ENCODE measurements at regions of chr3 and their contacts with region 1.

Region 1: GRCh38 chr3:64224826-64225610 is at the start of gene PRICKLE2:
- DNase-seq: peak; percentile 95
- H3K4me3 ChIP-seq: peak within 1 kb of the TSS in 2 of 3 experiments; percentile 45 to 52
- H3K27ac ChIP-seq: peak within 1 kb of the TSS; percentile 72
- H3K4me1 ChIP-seq: peaks cover 28% of the 10 kb centered on the region
- H3K27me3 ChIP-seq: no peaks in the 10 kb centered on the region
- CTCF ChIP-seq: peak in 1 of 2 donors; percentile 18
- POLR2A ChIP-seq: no peak
- total RNA-seq, gene PRICKLE2: 7.1 and 8.9 TPM in 2 replicates

Region 2: GRCh38 chr3:63937661-63938651 is 287.1 kb before region 1 on chr3:
- CTCF ChIA-PET with region 1: no interaction called
- POLR2A ChIA-PET with region 1: no interaction called
- dilution Hi-C with region 1: no loop called
- intact Hi-C with region 1: no loop called
- DNase-seq: no peak
- H3K4me3 ChIP-seq: no peak overlapping the region
- H3K27ac ChIP-seq: no peak overlapping the region
- H3K4me1 ChIP-seq: peaks cover 22% of the 10 kb centered on the region
- H3K27me3 ChIP-seq: no peaks in the 10 kb centered on the region
- CTCF ChIP-seq: no peak
- POLR2A ChIP-seq: no peak

Region 3: GRCh38 chr3:64093825-64094712 is 130.9 kb before region 1 on chr3:
- CTCF ChIA-PET with region 1: no interaction called
- POLR2A ChIA-PET with region 1: no interaction called
- dilution Hi-C with region 1: no loop called
- intact Hi-C with region 1: loop called (anchors 5 kb)
- DNase-seq: peak; percentile 80
- H3K4me3 ChIP-seq: no peak overlapping the region
- H3K27ac ChIP-seq: no peak overlapping the region
- H3K4me1 ChIP-seq: peaks cover 22% of the 10 kb centered on the region
- H3K27me3 ChIP-seq: no peaks in the 10 kb centered on the region
- CTCF ChIP-seq: no peak
- POLR2A ChIP-seq: no peak

Region 4: GRCh38 chr3:64213962-64214379 is 11.0 kb before region 1 on chr3:
- CTCF ChIA-PET with region 1: interaction called, 27 read pairs
- POLR2A ChIA-PET with region 1: no interaction called
- dilution Hi-C with region 1: no loop called
- intact Hi-C with region 1: loop called (anchors 1 kb)
- DNase-seq: peak; percentile 83
- H3K4me3 ChIP-seq: peak overlapping the region in 2 of 3 experiments; percentile 3 to 20
- H3K27ac ChIP-seq: peak overlapping the region; percentile 15
- H3K4me1 ChIP-seq: peaks cover 35% of the 10 kb centered on the region
- H3K27me3 ChIP-seq: no peaks in the 10 kb centered on the region
- CTCF ChIP-seq: no peak
- POLR2A ChIP-seq: no peak

Region 5: GRCh38 chr3:64355401-64355807 is 130.4 kb after region 1 on chr3:
- CTCF ChIA-PET with region 1: interaction called, 4 read pairs
- POLR2A ChIA-PET with region 1: no interaction called
- dilution Hi-C with region 1: no loop called
- intact Hi-C with region 1: loop called (anchors 1 kb)
- DNase-seq: peak; percentile 78
- H3K4me3 ChIP-seq: no peak overlapping the region
- H3K27ac ChIP-seq: peak overlapping the region; percentile 48
- H3K4me1 ChIP-seq: peaks cover 46% of the 10 kb centered on the region
- H3K27me3 ChIP-seq: no peaks in the 10 kb centered on the region
- CTCF ChIP-seq: no peak
- POLR2A ChIP-seq: no peak

Region 6: DNA sequence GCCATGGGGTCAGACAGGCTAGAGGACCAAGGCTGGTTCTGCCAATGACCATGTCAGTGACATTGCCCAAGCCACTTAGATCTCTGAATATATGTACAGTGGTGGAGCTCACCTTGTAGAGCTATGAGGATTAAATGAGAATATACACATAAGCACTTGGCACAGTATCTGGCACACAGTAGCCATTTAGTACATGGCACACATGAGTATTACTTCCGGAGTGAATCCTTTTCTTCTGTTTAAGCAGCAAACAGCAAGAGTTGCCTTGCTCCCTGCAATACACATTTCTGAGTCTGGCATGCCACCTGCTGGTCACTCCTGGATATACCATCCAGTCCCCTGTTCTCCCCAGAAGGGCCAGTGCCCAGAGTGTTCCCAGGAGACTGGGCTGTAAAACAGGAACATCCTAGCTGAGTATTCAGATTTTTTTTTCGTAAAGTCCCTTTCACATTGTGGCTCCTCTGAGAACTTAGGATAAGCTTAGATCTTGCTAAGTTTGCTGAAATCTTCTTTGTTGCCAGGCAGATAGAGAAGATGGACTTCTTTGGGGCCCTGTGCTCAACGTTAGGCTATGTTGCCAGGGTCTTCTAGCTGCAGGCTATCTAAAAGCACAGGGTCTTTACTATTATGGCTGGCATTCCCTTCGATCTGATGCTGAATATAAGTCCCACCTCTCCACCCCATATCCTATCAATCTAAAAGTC is 259.4 kb after region 1 on chr3:
- CTCF ChIA-PET with region 1: interaction called, 8 read pairs
- POLR2A ChIA-PET with region 1: no interaction called
- dilution Hi-C with region 1: no loop called
- intact Hi-C with region 1: loop called (anchors 2 kb)
- DNase-seq: peak; percentile 81
- H3K4me3 ChIP-seq: no peak overlapping the region
- H3K27ac ChIP-seq: no peak overlapping the region
- H3K4me1 ChIP-seq: peaks cover 4% of the 10 kb centered on the region
- H3K27me3 ChIP-seq: peaks cover 8 to 13% of the 10 kb centered on the region in 2 experiments
- CTCF ChIP-seq: peak; percentile 78 to 81
- POLR2A ChIP-seq: no peak